IMR-90 (cell line): ENCODE measurements at regions of chr6 and their contacts with region 1.

Region 1: GRCh38 chr6:5471044-5471443 is 209.7 kb downstream of the FARS2 start:
- DNase-seq: peak; percentile 58
- ATAC-seq: peak; percentile 71; the same call in 1 of the 2 replicates
- H3K4me3 ChIP-seq: no peak overlapping the region
- H3K27ac ChIP-seq: no peak overlapping the region
- H3K4me1 ChIP-seq: peaks cover 6% of the 10 kb centered on the region
- H3K27me3 ChIP-seq: no peaks in the 10 kb centered on the region
- CTCF ChIP-seq: peak; percentile 75
- POLR2A ChIP-seq: no peak
- RAD21 ChIP-seq: peak; percentile 81

Region 2: DNA sequence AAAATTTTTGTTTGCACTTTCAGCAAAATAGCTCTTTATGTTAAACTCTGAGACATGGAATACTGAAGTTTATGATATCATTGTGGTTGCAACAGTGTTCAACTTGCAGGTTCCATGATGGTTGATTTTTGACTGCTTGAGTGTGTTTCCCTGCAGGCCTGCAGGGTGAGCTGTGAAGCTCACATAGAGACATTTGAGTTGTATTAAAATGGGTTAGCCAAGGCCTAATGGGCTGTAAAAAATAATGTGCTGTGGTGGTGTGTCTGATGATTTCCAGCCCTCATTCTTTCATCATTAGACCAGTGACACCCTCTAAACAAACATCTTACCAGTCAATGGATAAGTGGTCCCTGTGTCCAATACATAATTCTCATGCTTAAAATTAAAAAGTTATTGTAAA is 111.7 kb after region 1 on chr6:
- CTCF ChIA-PET with region 1: no interaction called
- POLR2A ChIA-PET with region 1: no interaction called
- dilution Hi-C with region 1: no loop called
- in situ Hi-C with region 1: no loop called
- intact Hi-C with region 1: loop called (anchors 1 kb)
- DNase-seq: no peak
- ATAC-seq: no peak
- H3K4me3 ChIP-seq: no peak overlapping the region
- H3K27ac ChIP-seq: no peak overlapping the region
- H3K4me1 ChIP-seq: peaks cover 8% of the 10 kb centered on the region
- H3K27me3 ChIP-seq: no peaks in the 10 kb centered on the region
- CTCF ChIP-seq: no peak
- POLR2A ChIP-seq: no peak
- RAD21 ChIP-seq: no peak

Region 3: GRCh38 chr6:5766260-5766659 is 295.2 kb after region 1 on chr6:
- CTCF ChIA-PET with region 1: interaction called, 6 read pairs
- POLR2A ChIA-PET with region 1: no interaction called
- dilution Hi-C with region 1: no loop called
- in situ Hi-C with region 1: no loop called
- intact Hi-C with region 1: loop called (anchors 2 kb)
- DNase-seq: no peak
- ATAC-seq: no peak
- H3K4me3 ChIP-seq: no peak overlapping the region
- H3K27ac ChIP-seq: no peak overlapping the region
- H3K4me1 ChIP-seq: no peaks in the 10 kb centered on the region
- H3K27me3 ChIP-seq: no peaks in the 10 kb centered on the region
- CTCF ChIP-seq: peak; percentile 35
- POLR2A ChIP-seq: no peak
- RAD21 ChIP-seq: peak; percentile 41

Region 4: DNA sequence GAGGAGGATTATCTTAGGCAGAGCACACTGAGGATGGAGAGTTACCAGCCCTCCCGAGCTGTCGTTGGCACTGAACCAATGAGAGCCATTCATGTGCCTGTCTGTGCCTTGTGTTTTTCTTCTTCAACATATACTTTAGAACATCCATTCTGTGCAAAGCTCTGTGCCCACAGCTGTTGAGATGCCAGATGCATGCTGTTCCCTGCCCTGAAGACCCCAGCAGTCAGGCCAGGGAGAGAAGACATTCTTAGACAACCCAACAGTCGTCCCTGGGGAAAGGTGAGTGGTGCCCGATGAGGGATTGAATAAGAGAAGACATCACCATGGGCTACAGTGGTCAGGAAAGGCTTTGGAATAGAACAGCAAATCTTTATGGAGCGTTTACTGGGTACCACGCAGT is 421.6 kb after region 1 on chr6:
- CTCF ChIA-PET with region 1: no interaction called
- POLR2A ChIA-PET with region 1: no interaction called
- dilution Hi-C with region 1: no loop called
- in situ Hi-C with region 1: no loop called
- intact Hi-C with region 1: loop called (anchors 5 kb)
- DNase-seq: no peak
- ATAC-seq: no peak
- H3K4me3 ChIP-seq: no peak overlapping the region
- H3K27ac ChIP-seq: no peak overlapping the region
- H3K4me1 ChIP-seq: no peaks in the 10 kb centered on the region
- H3K27me3 ChIP-seq: no peaks in the 10 kb centered on the region
- CTCF ChIP-seq: no peak
- POLR2A ChIP-seq: no peak
- RAD21 ChIP-seq: no peak

Region 5: GRCh38 chr6:5995949-5996713 is 525.1 kb after region 1 on chr6:
- CTCF ChIA-PET with region 1: no interaction called
- POLR2A ChIA-PET with region 1: no interaction called
- dilution Hi-C with region 1: no loop called
- in situ Hi-C with region 1: loop called (anchors 25 kb)
- intact Hi-C with region 1: loop called (anchors 1 kb)
- DNase-seq: peak; percentile 19
- ATAC-seq: peak; percentile 75
- H3K4me3 ChIP-seq: peak overlapping the region; percentile 87
- H3K27ac ChIP-seq: no peak overlapping the region
- H3K4me1 ChIP-seq: no peaks in the 10 kb centered on the region; the same call in 1 of the 2 replicates
- H3K27me3 ChIP-seq: peaks cover 72% of the 10 kb centered on the region
- CTCF ChIP-seq: 0 out of 2 replicates have a peak, but pooled peaks have one; percentile 24
- POLR2A ChIP-seq: no peak
- RAD21 ChIP-seq: no peak

Region 6: DNA sequence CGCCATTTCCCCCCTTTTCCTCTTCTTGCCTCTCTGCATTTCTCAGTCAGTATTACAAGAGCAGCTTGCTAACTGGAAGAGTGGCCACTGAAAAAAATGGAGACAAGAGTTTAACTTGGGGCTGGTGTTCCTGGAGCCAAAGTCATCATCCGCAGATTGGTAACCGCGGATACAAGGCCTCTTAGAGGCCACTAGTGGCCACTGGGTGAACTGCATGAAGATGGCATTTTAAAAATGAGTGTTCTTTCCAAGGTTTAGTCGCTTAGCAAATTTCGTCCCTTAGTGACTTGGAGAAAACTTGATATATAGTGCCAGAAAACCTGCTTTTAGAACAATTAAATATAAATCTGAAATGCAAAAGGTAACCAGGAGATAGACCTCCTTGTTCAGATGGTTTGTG is 844.6 kb after region 1 on chr6:
- CTCF ChIA-PET with region 1: no interaction called
- POLR2A ChIA-PET with region 1: no interaction called
- dilution Hi-C with region 1: no loop called
- in situ Hi-C with region 1: no loop called
- intact Hi-C with region 1: loop called (anchors 10 kb)
- DNase-seq: peak; percentile 11
- ATAC-seq: peak; percentile 57; the same call in 1 of the 2 replicates
- H3K4me3 ChIP-seq: no peak overlapping the region
- H3K27ac ChIP-seq: no peak overlapping the region
- H3K4me1 ChIP-seq: no peaks in the 10 kb centered on the region
- H3K27me3 ChIP-seq: no peaks in the 10 kb centered on the region
- CTCF ChIP-seq: peak; percentile 41
- POLR2A ChIP-seq: no peak
- RAD21 ChIP-seq: peak; percentile 33; the same call in 1 of the 2 replicates

Region 7: DNA sequence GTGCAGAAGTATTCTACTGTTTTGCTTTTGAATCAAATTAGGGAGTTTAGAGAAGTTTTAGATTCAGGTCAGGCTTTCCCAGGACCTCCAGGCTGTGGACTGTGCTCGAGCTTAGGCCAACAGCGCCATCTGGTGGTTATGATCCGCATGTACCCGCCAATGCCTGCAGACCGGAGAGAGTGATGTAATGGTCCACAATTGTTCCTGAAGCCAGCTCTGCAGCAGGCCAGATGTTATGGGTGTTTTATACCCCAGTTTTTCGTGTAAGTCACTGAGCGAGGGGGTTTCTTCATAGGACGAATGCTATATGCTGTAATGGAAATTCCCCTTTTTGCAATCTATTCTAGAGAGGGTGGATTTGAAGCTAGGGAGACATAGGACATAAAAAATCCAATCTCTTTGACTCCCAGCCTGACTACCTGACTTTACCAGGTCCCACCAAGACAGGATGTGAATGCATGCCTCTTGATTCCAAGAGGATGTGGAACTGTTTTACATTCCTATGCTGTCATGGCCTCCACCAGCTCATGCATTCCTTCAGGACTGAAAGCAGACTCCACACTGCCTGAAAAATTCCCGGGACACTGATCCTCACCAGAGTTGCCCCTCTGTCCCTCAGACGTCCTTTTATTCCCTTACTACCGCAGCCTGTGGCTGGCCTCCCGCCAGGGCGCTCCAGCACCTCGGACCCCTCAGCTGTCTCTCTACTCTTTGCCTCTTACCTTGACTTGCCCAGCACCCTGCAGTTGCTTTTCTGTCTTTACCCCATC is 1076.3 kb after region 1 on chr6:
- CTCF ChIA-PET with region 1: no interaction called
- POLR2A ChIA-PET with region 1: no interaction called
- dilution Hi-C with region 1: no loop called
- in situ Hi-C with region 1: no loop called
- intact Hi-C with region 1: loop called (anchors 1 kb)
- DNase-seq: peak; percentile 75
- ATAC-seq: peak; percentile 97
- H3K4me3 ChIP-seq: peak overlapping the region; percentile 16
- H3K27ac ChIP-seq: no peak overlapping the region
- H3K4me1 ChIP-seq: no peaks in the 10 kb centered on the region
- H3K27me3 ChIP-seq: peaks cover 5% of the 10 kb centered on the region; the same call in 1 of the 2 replicates
- CTCF ChIP-seq: peak; percentile 92
- POLR2A ChIP-seq: no peak
- RAD21 ChIP-seq: peak; percentile 91